ENCODE measurements at regions of chr1 and their contacts with region 1.

Region 1: DNA sequence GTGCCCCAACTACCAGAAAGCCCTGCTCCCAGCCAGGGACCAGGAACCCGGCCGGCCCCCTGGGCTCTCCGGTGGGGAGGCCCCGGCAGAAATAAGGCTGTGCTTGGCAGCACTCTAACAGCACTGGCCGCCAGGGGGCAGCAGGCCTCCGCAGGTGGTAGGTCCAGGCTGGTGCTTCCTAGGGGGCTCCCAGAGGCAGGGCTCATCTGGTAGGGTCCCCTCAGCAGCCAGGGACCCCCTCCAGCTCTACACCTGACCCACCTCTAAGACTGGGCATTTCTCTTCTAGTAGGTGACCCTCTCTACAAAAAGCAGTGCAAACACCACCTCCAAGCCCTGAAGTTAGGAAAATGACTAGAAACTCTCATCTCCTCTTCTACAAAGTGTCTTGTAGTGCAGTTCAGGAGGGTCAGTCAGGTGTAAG is 85.6 kb downstream of the STUM start:
- DNase-seq: peak; percentile 85
- CTCF ChIP-seq: peak; percentile 92

Region 2: GRCh38 chr1:226424228-226425003 is 209.8 kb before region 1 on chr1:
- CTCF ChIA-PET with region 1: no interaction called
- POLR2A ChIA-PET with region 1: no interaction called
- DNase-seq: peak; percentile 49
- CTCF ChIP-seq: peak; percentile 44

Region 3: DNA sequence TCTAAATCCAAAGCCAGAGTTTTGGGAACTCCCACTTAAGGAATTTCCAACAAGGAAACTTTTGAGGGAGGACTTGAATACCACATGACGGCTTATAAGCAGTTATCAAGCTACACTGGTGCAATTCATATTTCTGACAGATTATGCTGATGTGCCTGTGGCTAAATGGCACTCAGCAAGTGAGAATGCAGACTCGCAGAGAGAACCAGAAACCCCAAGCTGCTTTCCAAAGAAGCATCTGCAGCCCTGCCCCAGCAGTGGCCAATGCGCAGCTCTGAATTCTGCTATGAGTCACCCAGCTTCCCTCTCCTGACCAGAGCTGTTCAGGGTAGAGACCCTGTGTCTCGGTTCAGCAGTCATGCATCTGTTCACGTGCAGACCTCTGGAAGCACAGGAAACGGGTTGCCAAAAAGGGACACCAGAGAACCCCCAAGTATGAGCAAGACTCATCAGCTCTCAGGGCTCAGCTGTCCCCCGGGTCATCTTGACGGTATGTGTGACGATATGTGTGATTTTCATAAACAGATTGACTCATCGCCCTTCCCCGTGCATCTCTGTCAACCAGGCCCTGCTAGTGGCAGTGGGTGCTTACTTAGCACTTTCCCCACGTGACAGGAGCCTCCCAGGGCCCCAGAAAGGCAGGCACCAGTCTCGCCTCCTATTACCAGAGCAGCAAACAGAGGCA is 28.6 kb after region 1 on chr1:
- CTCF ChIA-PET with region 1: interaction called, 25 read pairs
- POLR2A ChIA-PET with region 1: no interaction called
- DNase-seq: peak; percentile 88
- CTCF ChIP-seq: no peak

Region 4: GRCh38 chr1:226671290-226671689 is 37.1 kb after region 1 on chr1:
- CTCF ChIA-PET with region 1: interaction called, 11 read pairs
- POLR2A ChIA-PET with region 1: no interaction called
- DNase-seq: no peak
- CTCF ChIP-seq: no peak

Region 5: GRCh38 chr1:226687426-226687825 is 53.2 kb after region 1 on chr1:
- CTCF ChIA-PET with region 1: interaction called, 39 read pairs
- POLR2A ChIA-PET with region 1: no interaction called
- DNase-seq: no peak
- CTCF ChIP-seq: no peak

Region 6: GRCh38 chr1:226814751-226815496 is 180.7 kb after region 1 on chr1:
- CTCF ChIA-PET with region 1: interaction called, 14 read pairs
- POLR2A ChIA-PET with region 1: no interaction called
- DNase-seq: no peak
- CTCF ChIP-seq: no peak

Region 7: DNA sequence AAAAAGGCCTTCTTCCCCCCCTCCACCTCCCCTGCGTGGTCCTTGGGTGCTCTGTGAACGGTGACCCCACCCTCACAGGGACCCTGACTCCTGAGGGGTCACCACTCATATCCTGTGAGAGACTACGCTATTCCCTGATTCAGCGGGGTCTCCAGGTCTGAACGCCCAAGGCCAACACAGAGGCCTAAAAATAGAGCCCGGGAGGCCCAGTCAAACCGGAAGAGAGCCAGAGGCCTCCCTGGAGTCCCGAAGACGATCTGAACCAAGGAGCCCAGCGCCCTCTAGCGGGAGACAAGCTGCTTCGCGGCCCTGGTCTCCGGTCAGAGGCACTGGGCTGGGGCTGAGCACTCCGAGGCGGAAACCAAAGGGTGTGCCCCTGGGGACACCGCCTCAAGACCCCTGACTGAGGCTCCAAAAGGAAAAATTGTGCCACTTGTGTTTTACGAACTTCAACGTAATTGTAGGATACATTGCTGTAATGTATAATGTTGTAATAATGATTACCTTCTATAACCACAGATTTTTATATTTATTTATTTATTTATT is 193.9 kb after region 1 on chr1:
- CTCF ChIA-PET with region 1: interaction called, 100 read pairs
- POLR2A ChIA-PET with region 1: no interaction called
- DNase-seq: peak; percentile 94
- CTCF ChIP-seq: peak; percentile 98

Region 8: DNA sequence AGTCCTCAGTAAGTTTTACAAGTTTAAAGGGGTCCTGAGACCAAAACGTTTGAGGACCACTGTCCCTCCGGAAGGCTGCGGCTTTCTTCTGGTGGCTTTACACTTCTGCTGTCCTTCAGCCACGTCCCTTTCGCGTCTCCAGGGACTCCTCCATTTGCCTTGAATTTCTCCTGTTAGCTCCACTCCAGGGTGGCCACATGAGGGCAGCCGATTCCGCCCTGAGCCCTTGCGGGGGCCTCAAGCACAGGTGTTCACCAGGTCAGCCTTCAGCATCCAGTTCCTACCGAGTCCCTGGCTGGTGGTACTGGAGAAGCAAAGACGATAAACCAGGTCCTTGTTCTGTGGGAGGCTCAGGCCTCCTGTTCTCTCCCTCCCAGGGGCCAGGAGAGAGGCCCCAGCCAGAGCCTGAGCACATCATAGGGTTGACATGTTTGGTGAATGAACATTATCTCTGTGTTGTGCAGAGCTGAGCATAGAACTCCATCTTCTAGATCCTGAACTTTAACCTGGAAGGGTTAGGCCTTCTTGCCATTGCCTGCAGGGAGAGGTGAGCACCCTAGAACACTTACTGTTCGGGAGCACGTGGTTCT is 278.5 kb after region 1 on chr1:
- CTCF ChIA-PET with region 1: interaction called, 11 read pairs
- POLR2A ChIA-PET with region 1: no interaction called
- DNase-seq: peak; percentile 73
- CTCF ChIP-seq: peak; percentile 84